ENCODE measurements at regions of chr3 and their contacts with region 1.

Region 1: DNA sequence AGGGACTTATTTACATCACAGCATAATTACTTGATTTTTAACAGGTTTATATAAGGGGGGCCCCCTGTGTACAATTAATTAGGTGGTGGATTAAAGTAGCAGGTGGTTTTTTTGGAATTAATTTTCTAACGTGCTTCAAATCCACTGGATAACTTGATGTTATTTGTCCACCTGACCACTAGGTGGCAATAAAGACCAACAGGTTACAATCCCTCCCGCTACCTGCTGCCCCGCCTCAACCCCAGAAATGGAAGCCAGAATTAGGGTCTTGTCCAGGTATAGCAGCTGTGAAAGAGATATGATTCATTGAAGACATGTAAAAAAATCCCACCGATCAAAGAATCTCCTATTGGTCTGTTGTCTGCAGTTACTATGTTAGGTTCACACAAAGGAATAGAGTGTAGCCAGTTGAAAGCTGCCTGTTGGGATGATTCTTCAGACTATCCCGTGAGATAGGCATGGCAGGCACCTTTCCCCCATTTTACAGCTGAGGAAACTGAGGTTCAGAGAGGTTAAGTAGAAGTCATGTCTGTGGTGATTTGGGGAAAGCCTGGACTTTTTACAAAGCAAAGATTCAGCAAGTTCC is 44.0 kb downstream of the MFSD1 start:
- DNase-seq: peak in 2 of 6 donors; percentile 9 to 28
- ATAC-seq: peak; percentile 60 to 84 (median 78)
- H3K4me3 ChIP-seq: no peak overlapping the region
- H3K27ac ChIP-seq: no peak overlapping the region
- H3K4me1 ChIP-seq: no peaks in the 10 kb centered on the region
- H3K27me3 ChIP-seq: no peaks in the 10 kb centered on the region
- CTCF ChIP-seq: peak; percentile 53 to 70 (median 63)

Region 2: DNA sequence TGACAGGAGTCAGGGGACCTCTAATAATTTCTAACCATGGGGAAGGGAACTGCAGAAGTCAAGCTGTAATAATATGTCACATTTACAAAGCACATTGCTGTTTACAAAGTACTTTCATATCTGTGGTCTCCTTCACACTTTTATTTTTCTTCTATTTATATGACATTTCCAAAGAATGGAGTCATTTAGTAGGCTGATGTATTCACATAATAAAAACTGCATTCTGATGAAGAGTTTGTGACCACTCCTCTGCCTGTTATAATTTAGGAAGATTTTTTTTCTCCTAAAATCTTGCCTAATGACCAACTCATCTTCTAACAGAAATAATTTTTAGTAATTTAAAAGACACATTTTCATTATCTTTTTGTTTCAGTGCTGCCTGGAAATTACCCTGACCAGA is 1070.4 kb before region 1 on chr3:
- intact Hi-C with region 1: no loop called
- DNase-seq: no peak
- ATAC-seq: no peak
- H3K4me3 ChIP-seq: no peak overlapping the region
- H3K27ac ChIP-seq: no peak overlapping the region
- H3K4me1 ChIP-seq: no peaks in the 10 kb centered on the region
- H3K27me3 ChIP-seq: no peaks in the 10 kb centered on the region
- CTCF ChIP-seq: no peak

Region 3: GRCh38 chr3:159804726-159805410 is 959.0 kb after region 1 on chr3:
- intact Hi-C with region 1: loop called in 1 of 3 experiments (anchors 10 kb)
- DNase-seq: peak in 4 of 6 donors; percentile 33 to 65 (median 46)
- ATAC-seq: peak; percentile 86 to 98 (median 96)
- H3K4me3 ChIP-seq: no peak overlapping the region
- H3K27ac ChIP-seq: no peak overlapping the region
- H3K4me1 ChIP-seq: no peaks in the 10 kb centered on the region
- H3K27me3 ChIP-seq: no peaks in the 10 kb centered on the region
- CTCF ChIP-seq: peak; percentile 50 to 77 (median 69)